Activated T-helper 1 cell treated with anti-CD3 and anti-CD28 coated beads, Interleukin-12 subunit alpha, Interleukin-12 subunit beta, Interleukin-2, Interleukin-4 antibody, amounts not matched to agents 30 ng/mL and 10 ng/mL and 1 ng/mL, durations not matched to agents 14 hours and 24 hours and 36 hours (primary cell): ENCODE measurements at regions of chr22 and their contacts with region 1.

Region 1: GRCh38 chr22:37229805-37230672 is 14.0 kb downstream of the RAC2 start:
- DNase-seq: peak; percentile 87
- H3K4me3 Mint-ChIP-seq: peak overlapping the region; percentile 80
- H3K27ac Mint-ChIP-seq: peak overlapping the region; percentile 99
- H3K4me1 Mint-ChIP-seq: peaks cover 88% of the 10 kb centered on the region
- H3K27me3 Mint-ChIP-seq: no peaks in the 10 kb centered on the region

Region 2: DNA sequence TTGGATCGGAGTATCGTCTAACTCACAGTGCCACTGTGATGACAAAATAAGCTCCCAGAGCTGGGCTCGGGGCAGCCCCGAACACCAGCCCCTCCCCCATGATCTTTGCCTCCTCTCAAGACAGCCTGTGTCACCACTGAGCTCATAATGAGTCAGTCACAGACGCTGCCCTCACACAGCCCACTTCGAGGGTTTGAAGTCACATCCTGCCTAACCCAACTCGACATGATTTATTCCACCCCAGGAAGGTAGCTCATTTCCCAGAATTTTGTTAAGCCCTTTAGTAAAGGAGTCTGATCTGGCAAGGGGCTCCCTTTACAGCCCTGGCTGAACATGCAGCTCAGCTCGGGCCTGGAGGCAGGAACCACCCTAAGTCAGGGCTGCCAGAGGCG is 865.0 kb before region 1 on chr22:
- intact Hi-C with region 1: loop called (anchors 10 kb)
- DNase-seq: peak; percentile 84
- H3K4me3 Mint-ChIP-seq: peak overlapping the region; percentile 71
- H3K27ac Mint-ChIP-seq: peak overlapping the region; percentile 95
- H3K4me1 Mint-ChIP-seq: peaks cover 93% of the 10 kb centered on the region
- H3K27me3 Mint-ChIP-seq: no peaks in the 10 kb centered on the region

Region 3: GRCh38 chr22:37121887-37122591 is 108.0 kb before region 1 on chr22:
- intact Hi-C with region 1: loop called (anchors 1 kb)
- DNase-seq: peak; percentile 93
- H3K4me3 Mint-ChIP-seq: peak overlapping the region; percentile 86
- H3K27ac Mint-ChIP-seq: peak overlapping the region; percentile 100
- H3K4me1 Mint-ChIP-seq: peaks cover 85% of the 10 kb centered on the region
- H3K27me3 Mint-ChIP-seq: peaks cover 2% of the 10 kb centered on the region

Region 4: DNA sequence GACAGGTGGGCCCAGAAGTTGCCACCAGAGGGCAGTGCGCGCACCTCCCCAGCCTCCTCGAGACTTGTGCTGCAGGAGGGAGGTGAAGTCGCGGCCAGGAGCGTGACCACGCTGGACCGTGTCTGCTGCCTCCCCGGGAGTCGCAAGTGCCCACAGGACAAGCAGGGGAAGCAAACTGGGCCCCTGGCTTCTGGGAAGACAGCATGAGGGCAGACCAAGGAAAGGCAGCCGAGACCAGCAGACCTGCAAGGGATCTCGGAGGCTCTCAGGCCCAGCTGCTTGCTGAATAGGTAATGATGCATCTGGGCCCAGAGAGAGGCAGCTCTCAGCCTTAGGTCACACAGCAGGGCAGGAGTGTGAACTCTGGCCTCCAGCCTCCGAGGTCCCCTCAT is 63.4 kb before region 1 on chr22:
- intact Hi-C with region 1: loop called (anchors 1 kb)
- DNase-seq: peak; percentile 72
- H3K4me3 Mint-ChIP-seq: peak overlapping the region; percentile 75
- H3K27ac Mint-ChIP-seq: peak overlapping the region; percentile 69
- H3K4me1 Mint-ChIP-seq: peaks cover 78% of the 10 kb centered on the region
- H3K27me3 Mint-ChIP-seq: peaks cover 4% of the 10 kb centered on the region

Region 5: GRCh38 chr22:37248251-37248650 is 18.2 kb after region 1 on chr22:
- intact Hi-C with region 1: no loop called
- DNase-seq: no peak
- H3K4me3 Mint-ChIP-seq: no peak overlapping the region
- H3K27ac Mint-ChIP-seq: no peak overlapping the region
- H3K4me1 Mint-ChIP-seq: peaks cover 19% of the 10 kb centered on the region
- H3K27me3 Mint-ChIP-seq: peaks cover 7% of the 10 kb centered on the region

Region 6: DNA sequence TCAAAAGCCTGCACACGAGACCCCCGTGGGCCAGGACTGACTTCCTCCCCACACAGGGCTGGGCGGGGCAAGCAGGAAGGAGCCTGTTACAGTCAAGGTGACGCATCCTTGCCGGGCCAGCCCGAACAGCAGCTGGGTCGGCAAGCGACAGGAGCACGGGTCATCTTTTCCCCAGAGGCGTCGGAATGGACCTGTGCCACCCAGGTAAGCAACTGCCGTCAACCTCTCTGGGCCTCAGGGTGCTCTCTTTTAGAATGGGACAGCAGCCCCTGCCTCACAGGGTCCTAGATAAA is 52.3 kb after region 1 on chr22 and contains the start of gene CYTH4:
- intact Hi-C with region 1: loop called (anchors 2 kb)
- DNase-seq: peak; percentile 74
- H3K4me3 Mint-ChIP-seq: peak within 1 kb of the TSS; percentile 88
- H3K27ac Mint-ChIP-seq: peak within 1 kb of the TSS; percentile 99
- H3K4me1 Mint-ChIP-seq: peaks cover 65% of the 10 kb centered on the region
- H3K27me3 Mint-ChIP-seq: no peaks in the 10 kb centered on the region
- total RNA-seq, gene CYTH4: 49.5 and 57.1 TPM in 2 replicates